PC-3 (cell line): ENCODE measurements at regions of chr17 and their contacts with region 1.

Region 1: DNA sequence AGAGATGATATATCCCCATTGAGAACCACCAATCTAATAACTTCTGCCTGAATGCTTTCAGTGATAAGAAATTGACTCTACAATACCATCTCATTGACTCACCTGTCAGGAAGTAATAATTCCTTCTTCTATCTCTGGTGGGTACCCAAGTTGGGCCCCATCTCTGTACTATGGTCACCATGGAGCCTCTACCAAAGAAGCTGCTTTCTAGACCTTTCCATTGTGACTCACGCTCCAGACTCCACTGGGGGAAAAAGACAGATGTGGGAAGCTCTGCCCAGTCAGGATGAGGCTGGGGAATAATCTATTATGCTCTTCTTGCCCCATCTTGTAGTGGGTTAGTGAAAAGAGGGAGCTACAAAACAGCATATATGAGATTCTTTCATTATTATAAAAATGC is 100.4 kb downstream of the COPRS start:
- DNase-seq: no peak
- ATAC-seq: no peak
- H3K4me3 ChIP-seq: no peak overlapping the region
- H3K27ac ChIP-seq: no peak overlapping the region
- H3K4me1 ChIP-seq: 0 out of 2 replicates have a peak, but pooled peaks cover 3% of the 10 kb centered on the region
- H3K27me3 ChIP-seq: no peaks in the 10 kb centered on the region
- CTCF ChIP-seq: no peak

Region 2: GRCh38 chr17:31467502-31468256 is 291.0 kb before region 1 on chr17:
- CTCF ChIA-PET with region 1: no interaction called
- POLR2A ChIA-PET with region 1: no interaction called
- intact Hi-C with region 1: no loop called
- DNase-seq: no peak
- ATAC-seq: no peak
- H3K4me3 ChIP-seq: no peak overlapping the region
- H3K27ac ChIP-seq: no peak overlapping the region
- H3K4me1 ChIP-seq: no peaks in the 10 kb centered on the region
- H3K27me3 ChIP-seq: no peaks in the 10 kb centered on the region
- CTCF ChIP-seq: no peak

Region 3: DNA sequence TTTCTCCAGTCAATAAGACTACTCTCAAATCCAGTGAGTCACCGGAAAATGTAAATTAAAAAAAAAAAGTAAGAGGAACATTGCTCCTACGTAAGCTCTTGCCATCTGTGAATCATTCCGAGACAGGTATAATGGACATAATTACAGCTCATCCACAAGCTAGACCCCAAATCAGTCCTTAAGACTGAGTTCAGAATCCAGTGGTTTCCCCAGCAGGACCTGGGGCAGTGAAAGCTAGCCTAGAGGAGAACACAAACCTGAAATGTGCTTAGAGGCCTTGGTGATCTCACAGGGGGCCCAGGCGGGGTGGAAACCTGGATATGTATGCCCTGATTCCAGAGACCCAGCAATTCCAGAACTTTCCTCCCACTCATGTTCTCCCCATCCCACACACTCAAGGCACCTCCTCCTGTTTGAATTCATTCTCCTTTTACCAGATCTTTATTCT is 31.6 kb before region 1 on chr17:
- CTCF ChIA-PET with region 1: interaction called, 10 read pairs
- POLR2A ChIA-PET with region 1: no interaction called
- intact Hi-C with region 1: no loop called
- DNase-seq: peak; percentile 65
- ATAC-seq: no peak; the same call in 1 of the 2 replicates
- H3K4me3 ChIP-seq: no peak overlapping the region
- H3K27ac ChIP-seq: no peak overlapping the region
- H3K4me1 ChIP-seq: peaks cover 6% of the 10 kb centered on the region
- H3K27me3 ChIP-seq: no peaks in the 10 kb centered on the region
- CTCF ChIP-seq: no peak